ENCODE measurements at regions of chr17 and their contacts with region 1.

Region 1: GRCh38 chr17:81566461-81567126 is 14.4 kb upstream of the FAAP100 start:
- DNase-seq: peak; percentile 96
- H3K4me3 ChIP-seq: peak overlapping the region; percentile 26
- CTCF ChIP-seq: no peak

Region 2: DNA sequence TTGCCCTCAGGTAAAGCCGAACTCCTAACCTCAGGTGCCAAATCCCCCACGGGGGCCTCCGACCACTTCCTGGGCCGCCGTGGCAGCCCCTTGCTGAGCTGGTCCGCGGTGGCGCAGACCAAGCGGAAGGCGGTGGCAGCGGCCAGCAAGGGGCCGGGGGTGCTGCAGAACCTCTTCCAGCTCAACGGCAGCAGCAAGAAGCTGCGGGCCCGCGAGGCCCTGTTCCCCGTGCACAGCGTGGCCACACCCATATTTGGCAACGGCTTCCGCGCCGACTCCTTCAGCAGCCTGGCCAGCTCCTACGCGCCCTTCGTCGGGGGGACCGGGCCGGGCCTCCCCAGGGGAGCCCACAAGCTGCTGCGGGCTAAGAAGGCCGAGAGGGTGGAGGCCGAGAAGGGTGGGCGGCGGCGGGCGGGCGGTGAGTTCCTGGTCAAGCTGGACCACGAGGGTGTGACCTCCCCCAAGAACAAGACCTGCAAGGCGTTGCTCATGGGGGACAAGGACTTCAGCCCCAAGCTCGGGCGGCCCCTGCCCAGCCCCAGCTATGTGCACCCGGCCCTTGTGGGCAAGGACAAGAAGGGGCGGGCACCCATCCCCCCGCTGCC is 105.6 kb before region 1 on chr17:
- CTCF ChIA-PET with region 1: no interaction called
- POLR2A ChIA-PET with region 1: no interaction called
- DNase-seq: no peak
- H3K4me3 ChIP-seq: no peak overlapping the region
- CTCF ChIP-seq: no peak

Region 3: GRCh38 chr17:81553018-81553615 is 13.5 kb before region 1 on chr17:
- CTCF ChIA-PET with region 1: interaction called, 8 read pairs
- POLR2A ChIA-PET with region 1: interaction called, 33 read pairs
- DNase-seq: no peak
- H3K4me3 ChIP-seq: peak overlapping the region; percentile 91
- CTCF ChIP-seq: peak; percentile 1

Region 4: GRCh38 chr17:81576621-81577277 is 10.2 kb after region 1 on chr17:
- CTCF ChIA-PET with region 1: interaction called, 54 read pairs
- POLR2A ChIA-PET with region 1: interaction called, 32 read pairs
- DNase-seq: no peak
- H3K4me3 ChIP-seq: peak overlapping the region; percentile 27
- CTCF ChIP-seq: peak; percentile 12

Region 5: GRCh38 chr17:81582341-81582740 is 15.7 kb after region 1 on chr17:
- CTCF ChIA-PET with region 1: interaction called, 54 read pairs
- POLR2A ChIA-PET with region 1: interaction called, 32 read pairs
- DNase-seq: no peak
- H3K4me3 ChIP-seq: no peak overlapping the region
- CTCF ChIP-seq: no peak